ENCODE measurements at regions of chr4 and their contacts with region 1.

Region 1: GRCh38 chr4:145216535-145216934 is 36.1 kb upstream of the OTUD4 start:
- DNase-seq: peak; percentile 23
- H3K4me3 ChIP-seq: no peak overlapping the region
- H3K27ac ChIP-seq: no peak overlapping the region
- H3K4me1 ChIP-seq: no peaks in the 10 kb centered on the region
- H3K27me3 ChIP-seq: no peaks in the 10 kb centered on the region
- CTCF ChIP-seq: peak; percentile 53 to 67

Region 2: GRCh38 chr4:145154573-145154972 is 62.0 kb before region 1 on chr4:
- CTCF ChIA-PET with region 1: no interaction called
- dilution Hi-C with region 1: no loop called
- in situ Hi-C with region 1: no loop called
- intact Hi-C with region 1: loop called (anchors 1 kb)
- DNase-seq: peak; percentile 8
- H3K4me3 ChIP-seq: no peak overlapping the region
- H3K27ac ChIP-seq: no peak overlapping the region
- H3K4me1 ChIP-seq: no peaks in the 10 kb centered on the region
- H3K27me3 ChIP-seq: no peaks in the 10 kb centered on the region
- CTCF ChIP-seq: peak; percentile 28 to 51

Region 3: GRCh38 chr4:145557720-145558119 is 341.2 kb after region 1 on chr4:
- CTCF ChIA-PET with region 1: interaction called, 3 read pairs
- dilution Hi-C with region 1: no loop called
- in situ Hi-C with region 1: no loop called
- intact Hi-C with region 1: loop called (anchors 5 kb)
- DNase-seq: peak; percentile 75
- H3K4me3 ChIP-seq: no peak overlapping the region
- H3K27ac ChIP-seq: peak overlapping the region; percentile 42
- H3K4me1 ChIP-seq: peaks cover 5% of the 10 kb centered on the region
- H3K27me3 ChIP-seq: no peaks in the 10 kb centered on the region
- CTCF ChIP-seq: peak; percentile 97 to 99

Measured in mammary epithelial cell (primary cell).